Breast epithelium (tissue), 4 donors: ENCODE measurements at regions of chr11 and their contacts with region 1.

Region 1: GRCh38 chr11:60348116-60348515 is 21.1 kb downstream of the MS4A6E start:
- DNase-seq: no peak
- H3K4me3 ChIP-seq: no peak overlapping the region
- H3K27ac ChIP-seq: no peak overlapping the region
- H3K4me1 ChIP-seq: no peaks in the 10 kb centered on the region
- H3K27me3 ChIP-seq: no peaks in the 10 kb centered on the region
- CTCF ChIP-seq: no peak
- POLR2A ChIP-seq: no peak

Region 2: DNA sequence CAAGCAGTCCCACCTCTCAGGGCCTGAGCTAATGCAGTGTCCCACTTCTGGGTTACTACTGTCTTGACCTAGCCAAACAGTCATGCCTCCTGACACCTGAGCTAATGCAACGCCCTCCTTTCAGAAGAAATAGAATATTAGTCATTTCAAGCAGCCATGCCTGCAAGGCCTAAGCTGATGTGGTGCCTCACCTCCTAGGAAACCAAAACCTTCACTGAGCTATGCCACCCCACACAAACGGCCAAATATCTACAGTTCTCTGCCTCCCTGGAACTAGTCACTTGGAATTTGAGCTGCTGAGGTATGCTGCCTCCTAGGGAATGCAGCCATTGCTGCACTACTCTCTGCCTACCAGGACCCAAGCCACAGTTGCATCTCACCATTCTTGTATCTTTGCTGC is 29.4 kb before region 1 on chr11:
- intact Hi-C with region 1: no loop called
- DNase-seq: no peak
- H3K4me3 ChIP-seq: no peak overlapping the region
- H3K27ac ChIP-seq: no peak overlapping the region
- H3K4me1 ChIP-seq: no peaks in the 10 kb centered on the region
- H3K27me3 ChIP-seq: no peaks in the 10 kb centered on the region
- CTCF ChIP-seq: no peak
- POLR2A ChIP-seq: no peak

Region 3: DNA sequence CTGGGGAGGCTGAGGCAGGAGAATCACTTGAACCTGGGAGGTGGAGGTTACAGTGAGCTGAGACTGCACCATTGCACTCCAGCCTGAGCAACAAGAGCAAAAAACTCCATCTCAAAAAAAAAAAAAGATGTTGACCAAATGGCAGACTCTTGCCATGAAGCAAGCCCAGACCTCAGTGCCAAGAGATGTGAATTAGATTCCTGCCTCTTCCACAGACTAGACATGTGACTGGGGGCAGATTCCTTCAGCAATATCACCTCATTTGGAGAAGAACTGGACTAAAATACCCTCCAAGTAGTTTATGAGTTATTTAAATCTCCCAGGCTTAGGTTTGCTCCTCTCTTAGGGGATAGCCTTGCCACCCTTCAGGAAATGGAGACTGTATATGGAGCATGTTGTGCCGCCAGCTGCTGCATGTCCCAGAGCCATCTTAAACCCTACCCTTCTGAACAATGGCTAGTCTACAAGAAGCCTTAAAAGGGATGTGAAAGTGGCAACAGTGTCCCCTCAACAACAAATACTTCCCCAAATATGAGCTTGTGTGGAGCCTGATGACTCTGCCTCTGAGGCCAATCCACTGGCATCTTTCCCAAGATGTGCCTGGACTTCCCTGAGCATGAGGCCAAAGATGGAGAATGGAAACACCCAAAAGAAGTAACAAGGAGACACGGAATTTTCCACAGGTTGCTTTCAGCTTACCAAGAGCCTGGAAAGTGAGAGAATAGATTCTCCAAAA is 29.5 kb after region 1 on chr11:
- intact Hi-C with region 1: loop called (anchors 1 kb)
- DNase-seq: peak in 1 of 2 donors; percentile 39
- H3K4me3 ChIP-seq: no peak overlapping the region
- H3K27ac ChIP-seq: no peak overlapping the region
- H3K4me1 ChIP-seq: no peaks in the 10 kb centered on the region
- H3K27me3 ChIP-seq: no peaks in the 10 kb centered on the region
- CTCF ChIP-seq: no peak
- POLR2A ChIP-seq: no peak